Dorsolateral prefrontal cortex (tissue), 120 donors: ENCODE measurements at regions of chr9 and their contacts with region 1.

Region 1: GRCh38 chr9:127122176-127123063 is at the start of gene ANGPTL2:
- DNase-seq: peak; percentile 78 to 94 (median 90)
- H3K4me3 ChIP-seq: peak within 1 kb of the TSS; percentile 32 to 80 (median 62)
- H3K27ac ChIP-seq: peak within 1 kb of the TSS; percentile 13 to 95 (median 90)
- H3K27me3 ChIP-seq: no peaks in the 10 kb centered on the region
- CTCF ChIP-seq: peak in 16 of 56 donors; percentile 5 to 50 (median 18)
- total RNA-seq, gene ANGPTL2: 1.8 to 27.8 (median 7.2) TPM

Region 2: DNA sequence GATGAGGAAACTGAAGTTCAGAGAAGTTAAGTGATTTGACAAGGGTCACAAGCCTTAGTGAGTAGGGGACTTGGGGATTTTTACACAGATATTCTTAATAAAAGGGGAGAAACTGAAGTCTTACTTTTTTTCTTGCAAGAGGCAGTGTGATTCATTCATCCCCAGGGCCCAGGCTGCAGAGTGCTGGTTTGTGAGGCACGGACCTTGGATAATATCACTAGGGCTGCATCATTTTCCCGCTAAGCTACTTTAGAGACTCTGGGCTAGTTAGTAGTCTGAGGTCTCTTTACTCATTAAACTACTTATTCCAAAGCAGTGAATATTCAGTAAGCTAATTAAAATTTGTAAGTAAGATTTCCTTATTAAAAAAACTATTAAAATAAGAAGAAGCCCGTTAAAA is 1180.3 kb before region 1 on chr9:
- intact Hi-C with region 1: no loop called
- DNase-seq: no peak
- H3K4me3 ChIP-seq: no peak overlapping the region
- H3K27ac ChIP-seq: no peak overlapping the region
- H3K27me3 ChIP-seq: no peaks in the 10 kb centered on the region
- CTCF ChIP-seq: no peak

Region 3: GRCh38 chr9:126893079-126893478 is 229.3 kb before region 1 on chr9:
- intact Hi-C with region 1: no loop called
- DNase-seq: no peak
- H3K4me3 ChIP-seq: peak overlapping the region in 3 of 59 donors; percentile 19 to 30 (median 24)
- H3K27ac ChIP-seq: no peak overlapping the region
- H3K27me3 ChIP-seq: no peaks in the 10 kb centered on the region
- CTCF ChIP-seq: peak in 55 of 56 donors; percentile 18 to 72 (median 48)

Region 4: DNA sequence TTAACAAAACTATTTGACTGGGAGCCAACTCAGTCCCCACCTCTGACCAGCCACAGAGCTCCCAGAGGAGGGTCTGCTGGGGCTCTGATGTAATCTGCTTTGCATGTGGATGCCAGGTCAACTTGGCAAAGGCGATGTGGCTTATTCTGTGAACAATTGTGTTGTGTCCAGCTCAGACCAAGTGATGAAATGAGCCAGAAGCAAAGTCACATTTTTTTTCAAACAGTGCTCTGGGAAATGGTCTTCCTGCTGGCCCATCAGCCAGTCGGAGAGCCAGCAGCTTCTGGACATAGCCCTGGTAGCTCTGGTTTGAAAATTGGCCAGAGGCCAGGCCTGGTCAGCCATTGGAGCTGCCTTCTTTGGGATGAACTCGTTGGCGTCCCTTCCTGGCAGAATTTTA is 86.5 kb before region 1 on chr9:
- intact Hi-C with region 1: loop called in 1 of 2 experiments (anchors 5 kb)
- DNase-seq: peak in 4 of 10 donors; percentile 38 to 55 (median 42)
- H3K4me3 ChIP-seq: peak overlapping the region in 1 of 59 donors; percentile 2
- H3K27ac ChIP-seq: peak overlapping the region in 51 of 59 donors; percentile 1 to 88 (median 68)
- H3K27me3 ChIP-seq: no peaks in the 10 kb centered on the region
- CTCF ChIP-seq: peak in 1 of 56 donors; percentile 14

Region 5: GRCh38 chr9:127058011-127058644 is 64.3 kb before region 1 on chr9:
- intact Hi-C with region 1: no loop called
- DNase-seq: peak; percentile 24 to 77 (median 64)
- H3K4me3 ChIP-seq: no peak overlapping the region
- H3K27ac ChIP-seq: peak overlapping the region; percentile 4 to 94 (median 84)
- H3K27me3 ChIP-seq: no peaks in the 10 kb centered on the region
- CTCF ChIP-seq: no peak

Region 6: GRCh38 chr9:127074561-127075548 is 47.6 kb before region 1 on chr9:
- intact Hi-C with region 1: loop called in 1 of 2 experiments (anchors 10 kb)
- DNase-seq: peak in 4 of 10 donors; percentile 57 to 80 (median 74)
- H3K4me3 ChIP-seq: peak overlapping the region in 1 of 59 donors; percentile 1
- H3K27ac ChIP-seq: peak overlapping the region; percentile 2 to 93 (median 79)
- H3K27me3 ChIP-seq: no peaks in the 10 kb centered on the region
- CTCF ChIP-seq: peak in 4 of 56 donors; percentile 14 to 31 (median 19)

Region 7: DNA sequence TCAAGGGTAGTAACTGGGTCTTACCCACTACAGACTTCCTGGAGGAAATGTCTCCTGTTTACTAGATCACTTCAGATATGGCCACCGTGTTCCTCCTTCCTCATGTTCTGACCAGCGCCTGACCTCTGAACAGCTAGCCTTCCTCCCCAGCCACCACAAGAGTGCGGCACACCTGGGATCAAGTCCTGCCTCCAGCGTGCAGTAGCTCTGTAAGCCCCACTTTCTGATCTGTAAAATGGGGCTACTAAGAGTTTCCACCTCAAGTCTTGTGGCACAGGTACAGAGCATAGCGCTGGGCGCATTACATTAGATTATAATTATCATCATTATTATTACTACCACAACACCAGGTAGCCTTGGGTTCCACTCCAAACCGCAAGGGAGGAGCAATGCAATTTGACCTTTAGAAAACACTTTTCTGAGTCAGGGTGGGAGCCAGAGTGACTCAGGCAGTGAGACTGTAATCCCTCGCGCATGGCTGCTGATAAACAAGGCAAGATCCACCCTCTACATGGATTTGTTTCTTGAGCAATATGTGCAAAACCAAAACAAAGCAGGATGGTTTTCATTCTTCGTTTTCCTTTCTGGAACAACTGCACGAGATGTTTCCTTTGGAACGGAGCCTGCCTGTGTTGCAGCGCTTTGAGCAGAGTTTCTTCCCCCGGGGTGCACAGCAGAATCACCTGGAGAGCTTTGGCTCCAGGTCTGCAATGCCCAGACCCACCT is 65.0 kb after region 1 on chr9:
- intact Hi-C with region 1: loop called (anchors 5 kb)
- DNase-seq: peak in 2 of 10 donors; percentile 9 to 36
- H3K4me3 ChIP-seq: no peak overlapping the region
- H3K27ac ChIP-seq: peak overlapping the region in 57 of 59 donors; percentile 34 to 94 (median 85)
- H3K27me3 ChIP-seq: no peaks in the 10 kb centered on the region
- CTCF ChIP-seq: no peak